ENCODE measurements at regions of chr2 and their contacts with region 1.

Region 1: GRCh38 chr2:73085691-73086360 is 14.3 kb upstream of the SFXN5 start:
- DNase-seq: peak; percentile 48
- H3K4me3 ChIP-seq: no peak overlapping the region
- H3K27ac ChIP-seq: no peak overlapping the region
- H3K4me1 ChIP-seq: peaks cover 21% of the 10 kb centered on the region
- H3K27me3 ChIP-seq: no peaks in the 10 kb centered on the region
- CTCF ChIP-seq: peak; percentile 86 to 95

Region 2: GRCh38 chr2:73071360-73072133 is 14.3 kb before region 1 on chr2 and contains the start of gene SFXN5:
- CTCF ChIA-PET with region 1: no interaction called
- dilution Hi-C with region 1: no loop called
- in situ Hi-C with region 1: no loop called
- intact Hi-C with region 1: loop called (anchors 1 kb)
- DNase-seq: peak; percentile 93
- H3K4me3 ChIP-seq: peak within 1 kb of the TSS; percentile 59 to 91 (median 86)
- H3K27ac ChIP-seq: peak within 1 kb of the TSS; percentile 72
- H3K4me1 ChIP-seq: peaks cover 35% of the 10 kb centered on the region
- H3K27me3 ChIP-seq: no peaks in the 10 kb centered on the region
- CTCF ChIP-seq: peak in 1 of 2 donors; percentile 31
- total RNA-seq, gene SFXN5: 12.0 to 16.8 TPM

Region 3: GRCh38 chr2:73156539-73157124 is 70.8 kb after region 1 on chr2:
- CTCF ChIA-PET with region 1: interaction called, 4 read pairs
- dilution Hi-C with region 1: loop called (anchors 5 kb)
- in situ Hi-C with region 1: loop called (anchors 5 kb)
- intact Hi-C with region 1: loop called (anchors 1 kb)
- DNase-seq: peak; percentile 24
- H3K4me3 ChIP-seq: peak overlapping the region in 1 of 3 experiments; percentile 36
- H3K27ac ChIP-seq: no peak overlapping the region
- H3K4me1 ChIP-seq: no peaks in the 10 kb centered on the region
- H3K27me3 ChIP-seq: no peaks in the 10 kb centered on the region
- CTCF ChIP-seq: peak; percentile 76 to 86

Region 4: GRCh38 chr2:73176881-73177644 is 91.2 kb after region 1 on chr2:
- CTCF ChIA-PET with region 1: no interaction called
- dilution Hi-C with region 1: no loop called
- in situ Hi-C with region 1: no loop called
- intact Hi-C with region 1: loop called (anchors 1 kb)
- DNase-seq: peak; percentile 64
- H3K4me3 ChIP-seq: peak overlapping the region; percentile 55 to 59 (median 55)
- H3K27ac ChIP-seq: no peak overlapping the region
- H3K4me1 ChIP-seq: peaks cover 27% of the 10 kb centered on the region
- H3K27me3 ChIP-seq: peaks cover 13% of the 10 kb centered on the region
- CTCF ChIP-seq: peak; percentile 64 to 93

Region 5: DNA sequence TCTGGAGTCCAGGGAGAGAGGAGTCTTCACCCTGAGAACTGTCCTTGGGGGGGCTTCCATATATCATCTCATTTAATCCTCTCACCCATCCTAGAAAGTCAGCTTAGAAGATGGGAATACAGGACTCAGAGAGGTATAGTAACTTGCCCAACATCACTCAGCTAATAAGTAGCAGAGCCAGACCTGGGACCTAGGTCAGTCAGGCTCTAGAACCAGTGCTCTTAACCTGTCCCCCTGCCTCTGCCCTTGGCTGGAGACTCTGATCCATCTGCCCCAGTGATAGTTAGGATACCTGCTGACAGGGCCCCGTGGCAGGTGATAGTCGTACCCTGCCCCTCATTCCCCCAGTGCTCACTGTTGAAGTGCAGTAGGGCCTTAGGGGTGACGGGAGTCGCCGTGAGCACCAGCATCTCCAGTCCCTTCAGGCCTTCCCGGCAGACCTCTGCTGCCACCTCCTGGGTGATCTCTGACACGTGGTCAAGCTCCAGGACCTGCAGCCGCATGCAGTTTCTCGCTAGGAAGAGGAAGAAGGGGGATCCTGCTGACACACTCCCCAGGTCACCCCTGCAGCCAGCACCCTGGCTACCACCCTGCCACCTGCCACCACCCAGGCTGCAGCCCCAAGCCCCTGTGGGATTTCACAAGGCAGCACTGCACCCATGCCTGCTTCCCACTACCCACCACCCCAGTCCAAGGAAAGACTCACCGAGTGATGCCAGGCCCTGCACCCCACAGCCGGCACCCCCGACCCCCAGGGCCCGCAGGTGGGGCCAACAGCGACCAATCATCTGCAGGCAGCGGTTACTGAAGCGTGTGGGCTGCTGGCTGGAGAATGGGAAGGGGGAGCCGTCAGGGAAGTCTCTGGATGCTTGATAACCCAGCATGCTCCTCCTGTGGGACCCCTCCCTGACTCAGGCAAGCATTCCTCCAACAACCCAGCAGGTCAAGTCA is 174.5 kb after region 1 on chr2:
- CTCF ChIA-PET with region 1: no interaction called
- dilution Hi-C with region 1: no loop called
- in situ Hi-C with region 1: no loop called
- intact Hi-C with region 1: loop called (anchors 5 kb)
- DNase-seq: peak; percentile 39
- H3K4me3 ChIP-seq: no peak overlapping the region
- H3K27ac ChIP-seq: no peak overlapping the region
- H3K4me1 ChIP-seq: peaks cover 7% of the 10 kb centered on the region
- H3K27me3 ChIP-seq: no peaks in the 10 kb centered on the region
- CTCF ChIP-seq: peak; percentile 45 to 70

Region 6: DNA sequence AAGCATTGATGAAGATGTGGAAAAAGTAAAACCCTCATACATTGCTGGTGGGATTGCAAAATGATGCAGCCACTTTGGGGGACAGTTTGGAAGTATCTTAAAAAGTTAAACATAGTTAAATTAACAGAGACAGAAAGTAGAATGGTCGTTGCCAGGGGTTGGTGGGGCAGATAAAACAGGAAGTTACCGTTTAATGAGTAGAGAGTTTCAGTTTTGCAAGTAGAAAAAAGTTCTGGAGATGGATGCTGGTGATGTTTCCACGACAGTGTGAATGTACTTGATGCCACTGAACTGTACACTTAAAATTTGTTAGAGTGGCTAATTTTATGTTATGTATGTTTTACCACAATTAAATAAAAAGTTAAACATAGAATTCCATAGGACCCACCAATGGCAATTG is 252.0 kb after region 1 on chr2:
- CTCF ChIA-PET with region 1: no interaction called
- dilution Hi-C with region 1: no loop called
- in situ Hi-C with region 1: no loop called
- intact Hi-C with region 1: no loop called
- DNase-seq: no peak
- H3K4me3 ChIP-seq: no peak overlapping the region
- H3K27ac ChIP-seq: no peak overlapping the region
- H3K4me1 ChIP-seq: no peaks in the 10 kb centered on the region
- H3K27me3 ChIP-seq: peaks cover 2% of the 10 kb centered on the region
- CTCF ChIP-seq: no peak